ENCODE measurements at regions of chr3 and their contacts with region 1.

Region 1: DNA sequence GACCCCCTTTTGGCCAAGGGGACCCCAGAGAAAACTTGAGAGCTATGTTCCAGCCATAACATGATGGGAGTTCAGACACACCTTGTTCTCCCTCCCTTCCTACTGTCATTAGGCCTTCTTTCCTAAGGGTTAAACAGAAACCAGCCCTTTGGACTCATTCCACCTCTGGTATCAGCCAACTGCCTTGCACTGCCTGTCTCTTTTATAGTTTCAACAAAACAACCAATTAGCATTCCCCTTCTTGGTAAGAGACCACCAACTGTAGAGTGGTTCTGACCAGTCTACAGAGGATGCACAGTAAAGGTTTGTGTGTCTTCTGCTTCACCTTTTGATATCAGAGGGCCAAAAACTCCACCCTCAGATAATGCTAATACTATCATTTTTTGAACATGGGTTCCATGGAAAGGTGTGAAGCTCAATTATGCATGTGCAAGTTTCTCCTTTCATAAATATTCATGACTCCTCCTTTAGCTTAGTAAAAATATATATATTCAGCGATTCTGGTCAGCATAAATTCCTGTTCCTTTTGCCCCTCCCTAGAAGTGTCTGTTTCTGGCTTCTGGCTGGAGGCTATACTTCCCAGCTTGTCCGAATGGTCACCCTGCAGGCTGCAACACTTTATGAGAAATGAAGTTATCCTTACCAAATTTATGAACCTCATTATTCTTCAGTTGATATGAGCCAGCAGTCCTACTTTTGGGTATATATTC is 55.9 kb downstream of the SERP1 start:
- DNase-seq: no peak
- H3K4me3 ChIP-seq: no peak overlapping the region
- H3K27ac ChIP-seq: no peak overlapping the region
- H3K4me1 ChIP-seq: no peaks in the 10 kb centered on the region
- H3K27me3 ChIP-seq: no peaks in the 10 kb centered on the region
- CTCF ChIP-seq: no peak
- EP300 ChIP-seq: no peak
- POLR2A ChIP-seq: no peak
- RAD21 ChIP-seq: no peak

Region 2: GRCh38 chr3:150503402-150504099 is 13.1 kb after region 1 on chr3:
- CTCF ChIA-PET with region 1: interaction called, 22 read pairs
- POLR2A ChIA-PET with region 1: interaction called, 3 read pairs
- DNase-seq: no peak
- H3K4me3 ChIP-seq: no peak overlapping the region
- H3K27ac ChIP-seq: no peak overlapping the region
- H3K4me1 ChIP-seq: no peaks in the 10 kb centered on the region
- H3K27me3 ChIP-seq: no peaks in the 10 kb centered on the region
- CTCF ChIP-seq: peak in 2 of 3 experiments; percentile 28; a peak in 2 of 4 replicates
- EP300 ChIP-seq: no peak
- POLR2A ChIP-seq: no peak
- RAD21 ChIP-seq: peak; percentile 0 to 24; a peak in 1 of 4 replicates

Region 3: DNA sequence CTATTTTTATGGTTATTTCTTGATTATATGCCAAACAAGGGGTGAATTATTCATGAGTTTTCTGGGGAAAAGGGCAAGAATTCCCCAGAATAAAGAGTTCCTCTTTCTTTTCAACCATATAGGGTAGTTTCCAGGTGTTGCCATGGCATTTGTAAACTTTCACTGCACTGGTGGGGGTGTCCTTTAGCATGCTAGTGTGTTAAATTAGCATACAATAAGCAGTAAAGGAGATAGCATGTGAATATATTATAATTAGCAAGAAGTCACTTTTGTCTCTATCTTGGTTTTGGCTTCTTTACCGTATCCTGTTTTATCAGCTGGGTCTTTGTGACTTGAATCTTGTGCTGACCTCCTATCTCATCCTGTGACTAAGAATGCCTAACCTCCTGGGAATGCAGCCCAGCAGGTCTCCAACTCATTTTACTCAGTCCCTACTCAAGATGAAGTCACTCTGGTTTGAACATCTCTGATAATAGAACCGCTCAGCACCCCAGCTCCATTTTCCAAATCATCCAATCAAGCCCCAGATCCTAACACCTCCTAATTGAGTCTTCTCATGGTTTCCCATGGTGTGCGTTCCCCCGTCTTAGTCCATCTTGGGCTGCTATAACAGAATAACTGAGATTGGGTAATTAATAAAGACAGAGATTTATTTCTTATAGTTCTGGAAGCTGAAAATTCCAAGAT is 109.3 kb after region 1 on chr3:
- CTCF ChIA-PET with region 1: no interaction called
- POLR2A ChIA-PET with region 1: no interaction called
- DNase-seq: no peak
- H3K4me3 ChIP-seq: peak overlapping the region in 2 of 4 experiments; percentile 5 to 43; a peak in 2 of 8 replicates
- H3K27ac ChIP-seq: peak overlapping the region; percentile 84
- H3K4me1 ChIP-seq: peaks cover 6 to 18% (median 14%) of the 10 kb centered on the region in 4 experiments; a peak in 4 of 7 replicates
- H3K27me3 ChIP-seq: no peaks in the 10 kb centered on the region
- CTCF ChIP-seq: no peak
- EP300 ChIP-seq: no peak
- POLR2A ChIP-seq: peak in 1 of 2 experiments; percentile 61; a peak in 1 of 3 replicates
- RAD21 ChIP-seq: no peak

Measured in H1 (cell line).